ENCODE measurements at regions of chr14 and their contacts with region 1.

Region 1: GRCh38 chr14:77707724-77708408 is at the starts of genes ALKBH1 and SLIRP:
- DNase-seq: peak; percentile 59
- ATAC-seq: peak; percentile 97
- H3K4me3 ChIP-seq: peak within 1 kb of the TSS; percentile 83 to 89
- H3K27ac ChIP-seq: peak within 1 kb of the TSS; percentile 50
- H3K4me1 ChIP-seq: peaks cover 11 to 23% of the 10 kb centered on the region in 2 experiments; a peak in 3 of 4 replicates
- H3K27me3 ChIP-seq: no peaks in the 10 kb centered on the region
- CTCF ChIP-seq: no peak
- POLR2A ChIP-seq: peak; percentile 94
- RAD21 ChIP-seq: no peak
- total RNA-seq, gene ALKBH1: 14.4 TPM
- total RNA-seq, gene SLIRP: 242 TPM

Region 2: DNA sequence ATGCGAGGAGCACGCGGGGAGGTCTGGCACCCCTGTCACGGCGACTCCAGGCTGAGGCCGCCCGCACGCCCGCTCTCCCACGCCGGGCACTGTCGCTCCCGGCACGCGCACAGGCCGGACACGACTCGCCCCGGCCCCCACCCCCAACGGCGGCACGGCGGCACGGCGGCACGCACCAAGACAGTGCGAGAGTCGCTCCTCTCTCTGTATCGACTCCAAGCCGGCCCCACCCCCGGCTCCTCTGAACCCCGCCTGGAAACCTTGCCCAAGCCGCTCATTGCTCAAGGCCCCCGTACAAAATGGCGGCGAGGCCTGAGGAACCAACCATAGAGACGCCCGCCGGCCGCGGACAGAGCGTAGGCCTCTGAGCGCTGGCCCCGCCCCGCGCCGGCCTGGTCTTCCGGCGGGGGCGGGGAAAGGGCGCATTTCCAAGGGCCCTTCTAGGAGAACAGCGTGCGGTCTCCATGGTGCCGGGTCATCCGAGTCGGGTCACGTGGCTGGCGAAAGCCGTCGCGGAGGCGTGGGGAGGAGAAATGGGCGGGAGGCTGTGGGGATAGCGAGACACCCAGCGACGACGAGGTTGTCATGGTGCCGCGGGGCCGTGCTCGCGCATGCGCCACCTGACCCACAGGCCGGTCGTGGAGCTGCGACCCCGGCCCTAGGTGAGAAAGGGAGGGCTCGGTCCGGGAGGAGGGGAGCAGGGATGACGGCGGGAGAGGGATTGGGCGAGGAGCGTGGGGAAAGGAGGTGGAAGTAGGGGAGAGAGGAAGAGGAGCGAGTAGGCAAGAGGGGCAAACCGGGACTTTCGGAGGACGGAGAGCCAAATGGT is 610.0 kb before region 1 on chr14 and contains the start of gene CIPC:
- CTCF ChIA-PET with region 1: no interaction called
- POLR2A ChIA-PET with region 1: no interaction called
- RAD21 ChIA-PET with region 1: no interaction called
- intact Hi-C with region 1: no loop called
- DNase-seq: peak; percentile 98
- ATAC-seq: peak; percentile 89
- H3K4me3 ChIP-seq: peak within 1 kb of the TSS; percentile 85 to 97
- H3K27ac ChIP-seq: peak within 1 kb of the TSS; percentile 91
- H3K4me1 ChIP-seq: peaks cover 24 to 28% of the 10 kb centered on the region in 2 experiments
- H3K27me3 ChIP-seq: no peaks in the 10 kb centered on the region
- CTCF ChIP-seq: no peak
- POLR2A ChIP-seq: peak; percentile 38
- RAD21 ChIP-seq: no peak
- total RNA-seq, gene CIPC: 20.6 TPM

Region 3: DNA sequence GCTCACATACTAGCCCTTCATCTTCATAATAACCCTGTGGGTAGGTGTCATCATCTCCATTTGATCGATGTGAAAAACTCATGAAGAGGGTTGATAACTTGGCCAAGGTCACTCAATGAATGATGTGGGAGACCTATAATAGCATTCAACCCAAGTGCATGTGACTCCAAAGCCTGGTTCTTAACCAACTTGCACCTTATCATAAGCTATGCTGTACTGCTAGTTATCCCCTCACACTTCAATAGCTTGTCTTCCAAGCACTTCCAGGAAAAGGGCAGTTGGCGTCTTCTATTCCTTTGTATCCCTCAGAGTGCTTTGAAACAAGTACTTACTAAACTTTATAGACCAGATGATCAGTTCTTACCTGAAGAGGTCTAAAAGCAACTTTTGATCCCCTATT is 265.7 kb before region 1 on chr14:
- CTCF ChIA-PET with region 1: no interaction called
- POLR2A ChIA-PET with region 1: no interaction called
- RAD21 ChIA-PET with region 1: no interaction called
- intact Hi-C with region 1: no loop called
- DNase-seq: no peak
- ATAC-seq: no peak
- H3K4me3 ChIP-seq: no peak overlapping the region
- H3K27ac ChIP-seq: no peak overlapping the region
- H3K4me1 ChIP-seq: no peaks in the 10 kb centered on the region
- H3K27me3 ChIP-seq: no peaks in the 10 kb centered on the region
- CTCF ChIP-seq: no peak
- POLR2A ChIP-seq: no peak
- RAD21 ChIP-seq: no peak

Region 4: GRCh38 chr14:77760381-77761246 is 52.7 kb after region 1 on chr14 and contains the start of gene SNW1:
- CTCF ChIA-PET with region 1: no interaction called
- POLR2A ChIA-PET with region 1: no interaction called
- RAD21 ChIA-PET with region 1: no interaction called
- intact Hi-C with region 1: no loop called
- DNase-seq: peak; percentile 83
- ATAC-seq: peak; percentile 90
- H3K4me3 ChIP-seq: peak within 1 kb of the TSS; percentile 70 to 92
- H3K27ac ChIP-seq: peak within 1 kb of the TSS; percentile 76
- H3K4me1 ChIP-seq: peaks cover 0 to 15% of the 10 kb centered on the region in 2 experiments; a peak in 3 of 4 replicates
- H3K27me3 ChIP-seq: no peaks in the 10 kb centered on the region
- CTCF ChIP-seq: no peak
- POLR2A ChIP-seq: peak; percentile 51
- RAD21 ChIP-seq: no peak
- total RNA-seq, gene SNW1: 102 TPM

Region 5: DNA sequence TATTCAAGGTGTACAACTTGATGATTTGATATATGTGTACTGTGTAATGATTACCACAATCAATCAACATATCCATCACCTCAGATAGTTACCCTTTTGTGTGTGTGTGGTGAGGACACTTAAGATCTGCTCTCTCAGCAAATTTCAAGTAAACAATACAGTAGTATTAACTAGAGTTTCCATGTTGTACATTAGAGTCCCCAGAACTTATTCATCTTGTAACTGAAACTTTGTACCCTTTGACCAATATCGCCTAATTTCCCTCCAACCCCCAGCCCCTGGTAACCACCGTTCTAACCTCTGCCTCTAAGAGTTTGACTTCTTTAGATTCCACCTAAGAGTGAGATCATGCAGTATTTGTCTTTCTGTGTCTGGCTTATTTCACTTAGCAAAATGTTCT is 104.2 kb after region 1 on chr14:
- CTCF ChIA-PET with region 1: no interaction called
- POLR2A ChIA-PET with region 1: no interaction called
- RAD21 ChIA-PET with region 1: no interaction called
- intact Hi-C with region 1: loop called (anchors 5 kb)
- DNase-seq: no peak
- ATAC-seq: no peak
- H3K4me3 ChIP-seq: no peak overlapping the region
- H3K27ac ChIP-seq: no peak overlapping the region
- H3K4me1 ChIP-seq: peaks cover 4 to 5% of the 10 kb centered on the region in 2 experiments; a peak in 3 of 4 replicates
- H3K27me3 ChIP-seq: no peaks in the 10 kb centered on the region
- CTCF ChIP-seq: no peak
- POLR2A ChIP-seq: no peak
- RAD21 ChIP-seq: no peak

Measured in HCT116 (cell line).